ENCODE measurements at regions of chr3 and their contacts with region 1.

Region 1: DNA sequence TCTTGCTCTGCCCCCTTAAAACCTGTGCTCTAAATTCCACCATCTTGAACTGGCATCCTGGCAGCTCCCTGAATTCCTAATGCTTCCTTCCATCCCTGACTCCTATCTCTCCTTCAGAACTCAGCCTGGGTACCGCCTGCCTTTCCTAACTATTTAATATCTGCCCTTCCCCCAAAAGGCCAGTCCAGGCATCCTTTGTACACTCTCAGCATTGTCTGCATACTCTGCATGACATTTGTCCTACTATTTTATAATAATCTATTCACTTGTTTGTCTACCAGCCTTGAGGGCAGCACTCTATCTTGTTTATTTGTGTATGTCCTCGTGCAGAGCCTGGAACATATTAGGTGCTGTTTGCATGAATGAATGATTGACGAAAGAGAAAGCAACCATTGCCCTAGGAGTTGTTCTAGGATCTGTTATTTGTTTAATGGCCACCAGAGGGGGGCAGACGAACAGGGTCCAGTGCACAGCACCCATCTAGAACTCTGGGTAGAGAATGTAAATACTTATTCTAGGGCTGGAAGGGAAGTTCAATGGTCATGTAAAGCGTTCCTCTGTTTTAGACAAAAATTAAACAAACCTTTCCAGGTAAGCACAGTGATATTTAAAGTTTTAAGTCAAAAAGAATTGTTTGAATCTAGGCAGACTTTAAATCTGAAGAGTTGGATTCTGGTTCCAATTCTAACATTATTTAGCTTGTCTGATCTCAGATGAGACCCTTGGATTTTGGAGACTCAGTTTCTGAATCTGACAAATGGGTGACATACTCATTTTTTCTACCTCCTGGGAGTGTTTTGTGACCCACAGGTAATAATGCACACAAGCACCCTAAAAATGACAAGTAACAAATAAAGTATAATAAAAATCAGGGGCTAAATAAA is 125.8 kb upstream of the GALNT15 start:
- DNase-seq: peak in 1 of 3 donors; percentile 58
- ATAC-seq: peak; percentile 93 to 97 (median 96)
- H3K4me3 ChIP-seq: peak overlapping the region in 2 of 3 donors; percentile 17 to 25
- H3K27ac ChIP-seq: no peak overlapping the region
- H3K4me1 ChIP-seq: peaks cover 0 to 4% (median 0%) of the 10 kb centered on the region in 4 donors
- H3K27me3 ChIP-seq: no peaks in the 10 kb centered on the region
- CTCF ChIP-seq: peak; percentile 79 to 88 (median 83)
- POLR2A ChIP-seq: no peak

Region 2: GRCh38 chr3:16174389-16174788 is 125.7 kb after region 1 on chr3 and contains the start of gene GALNT15:
- intact Hi-C with region 1: loop called in 1 of 2 experiments (anchors 5 kb)
- DNase-seq: peak; percentile 88 to 90 (median 88)
- ATAC-seq: peak; percentile 77 to 86 (median 85)
- H3K4me3 ChIP-seq: peak within 1 kb of the TSS in 2 of 3 donors; percentile 7 to 18
- H3K27ac ChIP-seq: peak within 1 kb of the TSS in 2 of 3 donors; percentile 21 to 51
- H3K4me1 ChIP-seq: peaks cover 0 to 4% (median 0%) of the 10 kb centered on the region in 4 donors
- H3K27me3 ChIP-seq: no peaks in the 10 kb centered on the region
- CTCF ChIP-seq: no peak
- POLR2A ChIP-seq: no peak
- total RNA-seq, gene GALNT15: 2.0 to 9.2 (median 4.0) TPM

Region 3: DNA sequence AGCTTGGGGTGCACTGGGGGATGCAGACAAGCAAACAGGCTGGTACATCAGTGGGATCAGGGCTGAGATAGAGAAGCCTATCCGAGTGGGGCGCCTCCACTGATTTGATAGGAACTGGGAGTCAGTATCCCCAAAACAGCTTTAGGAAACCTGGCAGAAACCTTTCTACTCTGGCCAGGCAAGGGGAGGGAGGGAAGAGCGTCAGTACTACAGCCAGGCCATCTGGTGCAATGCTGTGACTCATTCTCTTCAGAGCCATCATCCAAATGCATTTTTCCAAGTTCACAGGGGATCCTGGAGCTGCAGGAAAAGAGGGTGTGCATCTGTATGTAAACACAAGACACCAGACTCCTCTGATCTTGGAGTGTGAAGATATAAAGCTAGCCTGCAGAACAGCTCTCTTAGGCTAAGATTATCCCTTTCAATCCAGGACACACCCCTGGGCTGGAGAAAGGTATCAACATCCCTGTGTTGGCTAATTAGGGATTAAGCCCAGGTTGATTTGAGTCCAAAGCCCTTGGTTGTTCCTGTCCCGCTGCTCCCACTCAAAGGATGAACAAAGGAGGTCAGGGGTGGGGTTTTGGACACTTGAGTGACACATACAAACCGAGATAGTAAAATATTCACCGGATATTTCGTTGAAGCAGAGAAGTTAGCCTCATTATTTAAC is 135.1 kb after region 1 on chr3:
- intact Hi-C with region 1: loop called in 1 of 2 experiments (anchors 5 kb)
- DNase-seq: no peak
- ATAC-seq: peak in 1 of 4 donors; percentile 35
- H3K4me3 ChIP-seq: no peak overlapping the region
- H3K27ac ChIP-seq: no peak overlapping the region
- H3K4me1 ChIP-seq: no peaks in the 10 kb centered on the region
- H3K27me3 ChIP-seq: no peaks in the 10 kb centered on the region
- CTCF ChIP-seq: no peak
- POLR2A ChIP-seq: no peak

Measured in right lobe of liver (tissue), 6 donors.